ENCODE measurements at regions of chr12 and their contacts with region 1.

Region 1: DNA sequence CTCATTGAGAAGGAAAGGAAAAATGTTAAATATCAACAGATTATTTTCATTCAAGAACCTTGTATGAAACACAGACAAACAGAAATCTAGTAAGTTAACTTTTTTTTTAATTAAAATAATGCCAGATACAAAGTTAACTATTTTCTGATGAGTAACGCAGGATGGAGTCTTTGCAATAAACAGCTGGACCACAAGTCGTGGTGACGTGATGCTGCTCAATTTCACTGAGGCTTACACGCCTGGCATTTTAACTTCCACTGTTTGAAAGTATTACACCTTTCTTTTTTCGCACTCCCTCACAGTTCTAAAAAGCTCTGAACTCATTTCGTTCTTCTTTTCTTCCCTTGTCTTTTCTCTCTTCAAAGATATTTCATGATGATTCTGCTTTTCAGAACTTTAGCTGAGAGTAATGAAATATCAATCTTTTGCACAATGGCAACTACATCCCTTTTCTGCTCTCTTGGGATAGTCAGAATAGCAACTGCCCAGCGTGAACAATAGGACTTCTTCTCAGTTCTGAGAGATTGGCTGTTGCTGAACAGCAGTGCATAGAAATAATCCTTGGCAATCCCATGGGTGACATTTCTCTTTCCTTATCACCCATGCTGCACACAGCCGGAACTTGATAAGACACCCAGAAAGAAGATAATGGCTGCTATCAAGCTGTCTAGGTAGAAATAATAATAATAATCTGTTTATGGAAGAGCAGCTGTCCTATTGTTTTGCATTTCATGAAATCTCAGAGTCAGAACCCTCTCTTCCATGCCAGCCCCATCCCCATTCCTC is 160.5 kb downstream of the BTG1 start:
- DNase-seq: peak; percentile 83
- ATAC-seq: peak; percentile 69
- H3K4me3 ChIP-seq: no peak overlapping the region
- H3K27ac ChIP-seq: peak overlapping the region; percentile 46
- H3K4me1 ChIP-seq: peaks cover 27% of the 10 kb centered on the region
- H3K27me3 ChIP-seq: no peaks in the 10 kb centered on the region
- CTCF ChIP-seq: no peak
- POLR2A ChIP-seq: no peak
- RAD21 ChIP-seq: no peak

Region 2: DNA sequence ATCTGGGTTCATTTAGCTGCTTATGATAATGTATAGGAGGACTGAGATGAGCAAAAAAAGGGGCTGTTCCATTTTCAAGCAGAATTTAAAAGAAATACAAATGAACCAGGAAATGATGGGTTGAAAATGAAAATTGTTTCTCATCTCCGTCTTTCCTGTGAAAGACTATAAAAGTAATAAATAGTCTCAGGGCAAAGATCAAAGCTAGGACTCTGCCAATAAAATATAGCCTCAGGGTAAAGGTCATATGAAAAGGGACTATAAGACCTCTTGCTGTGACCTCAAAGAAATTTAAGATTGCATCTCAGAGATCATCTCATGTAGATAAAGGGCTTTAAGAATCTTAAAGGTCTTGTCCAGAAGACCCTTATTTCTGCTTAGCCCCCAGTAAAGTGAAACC is 317.5 kb before region 1 on chr12:
- CTCF ChIA-PET with region 1: no interaction called
- POLR2A ChIA-PET with region 1: no interaction called
- dilution Hi-C with region 1: no loop called
- in situ Hi-C with region 1: no loop called
- intact Hi-C with region 1: no loop called
- DNase-seq: no peak
- ATAC-seq: no peak
- H3K4me3 ChIP-seq: no peak overlapping the region
- H3K27ac ChIP-seq: no peak overlapping the region
- H3K4me1 ChIP-seq: no peaks in the 10 kb centered on the region
- H3K27me3 ChIP-seq: no peaks in the 10 kb centered on the region; the same call in 1 of the 2 replicates
- CTCF ChIP-seq: no peak
- POLR2A ChIP-seq: no peak
- RAD21 ChIP-seq: no peak

Region 3: DNA sequence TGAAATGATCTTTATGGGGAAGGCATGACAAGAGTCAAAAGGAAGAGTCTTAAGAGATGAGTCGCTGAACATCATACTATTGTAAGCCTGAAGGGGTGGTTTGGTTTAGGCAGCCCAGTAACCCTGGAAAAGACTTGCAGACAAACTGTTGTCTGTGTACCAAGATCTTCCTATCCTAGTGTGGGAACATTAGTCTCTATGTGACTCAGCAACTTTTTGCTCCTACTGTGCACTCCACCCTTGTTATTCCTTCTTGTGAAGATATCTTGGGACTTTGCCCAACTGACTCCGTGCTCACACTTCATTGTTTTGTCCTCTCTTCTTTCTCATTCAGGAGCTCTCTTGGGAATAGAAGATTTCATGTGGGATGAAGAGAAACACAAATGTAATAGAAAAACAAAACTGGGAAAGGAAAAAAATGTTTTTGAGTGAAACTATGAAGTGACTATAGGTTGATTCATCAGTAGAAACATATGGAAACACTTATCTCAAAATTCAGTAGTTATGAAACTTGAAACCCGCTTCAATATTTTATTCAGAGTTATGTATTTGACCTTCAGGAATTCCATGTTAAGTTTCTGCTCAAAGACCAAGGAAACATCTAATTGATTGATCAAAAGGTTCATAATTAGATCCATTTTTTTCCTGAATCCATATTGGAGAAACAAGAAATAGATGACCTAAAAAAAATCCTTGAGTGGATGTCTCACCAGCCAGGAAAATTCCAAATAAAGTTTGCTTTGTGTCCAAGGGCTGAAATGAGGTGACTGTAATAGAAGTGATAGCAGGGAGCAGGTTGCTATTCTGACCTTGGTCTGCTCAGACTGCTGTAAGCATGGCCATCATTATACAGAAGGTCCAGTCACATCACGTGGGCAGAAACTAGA is 93.2 kb after region 1 on chr12:
- CTCF ChIA-PET with region 1: no interaction called
- POLR2A ChIA-PET with region 1: interaction called, 3 read pairs
- dilution Hi-C with region 1: no loop called
- in situ Hi-C with region 1: no loop called
- intact Hi-C with region 1: loop called (anchors 5 kb)
- DNase-seq: peak; percentile 96
- ATAC-seq: peak; percentile 45
- H3K4me3 ChIP-seq: no peak overlapping the region
- H3K27ac ChIP-seq: peak overlapping the region; percentile 91; the same call in 1 of the 2 replicates
- H3K4me1 ChIP-seq: peaks cover 26% of the 10 kb centered on the region
- H3K27me3 ChIP-seq: no peaks in the 10 kb centered on the region
- CTCF ChIP-seq: no peak
- POLR2A ChIP-seq: no peak
- RAD21 ChIP-seq: no peak